Activated CD4-positive, alpha-beta T cell treated with anti-CD3 and anti-CD28 coated beads, Interleukin-2, amount 10 ng/mL, durations not matched to agents 7 days and 5 days (primary cell): ENCODE measurements at regions of chr2 and their contacts with region 1.

Region 1: DNA sequence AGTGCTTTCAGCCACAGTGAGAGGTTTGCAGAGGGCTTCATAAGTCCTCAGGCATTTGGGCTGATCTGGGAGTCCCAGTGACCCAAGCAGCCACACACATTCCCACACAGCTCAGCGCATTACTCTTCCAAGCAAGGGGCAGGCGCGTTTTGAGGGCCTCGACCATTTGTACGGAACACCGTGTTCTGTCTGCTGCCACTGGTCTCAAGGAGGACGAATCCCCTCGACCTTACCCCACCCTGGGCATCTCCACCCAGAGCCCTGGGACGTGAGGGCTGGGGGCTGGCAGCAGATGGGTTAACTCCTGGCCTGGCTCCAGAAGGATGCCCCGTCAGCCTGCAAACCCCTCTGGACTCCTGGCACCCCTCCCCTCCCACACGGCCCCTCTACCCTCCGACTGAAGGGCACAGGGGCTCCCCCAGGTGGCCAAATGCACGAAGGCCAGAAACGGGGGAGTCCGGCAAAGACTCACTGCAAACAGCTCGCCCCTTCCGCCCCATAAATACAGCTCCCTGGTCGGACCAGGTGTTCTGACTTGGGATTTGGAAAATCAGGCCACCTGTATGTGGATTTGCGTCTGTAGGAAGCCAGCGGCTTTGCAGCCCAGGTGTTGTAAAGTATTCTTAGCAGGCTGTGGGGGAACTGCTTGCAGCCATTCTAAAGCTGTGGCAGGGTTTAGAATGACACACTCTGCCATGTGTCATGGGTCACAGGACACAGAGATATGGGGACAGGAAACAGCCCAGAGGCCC is 33.6 kb upstream of the PTMA start:
- DNase-seq: peak; percentile 60
- H3K4me3 Mint-ChIP-seq: no peak overlapping the region
- H3K27ac Mint-ChIP-seq: peak overlapping the region; percentile 22
- H3K4me1 Mint-ChIP-seq: peaks cover 32% of the 10 kb centered on the region
- H3K27me3 Mint-ChIP-seq: no peaks in the 10 kb centered on the region

Region 2: DNA sequence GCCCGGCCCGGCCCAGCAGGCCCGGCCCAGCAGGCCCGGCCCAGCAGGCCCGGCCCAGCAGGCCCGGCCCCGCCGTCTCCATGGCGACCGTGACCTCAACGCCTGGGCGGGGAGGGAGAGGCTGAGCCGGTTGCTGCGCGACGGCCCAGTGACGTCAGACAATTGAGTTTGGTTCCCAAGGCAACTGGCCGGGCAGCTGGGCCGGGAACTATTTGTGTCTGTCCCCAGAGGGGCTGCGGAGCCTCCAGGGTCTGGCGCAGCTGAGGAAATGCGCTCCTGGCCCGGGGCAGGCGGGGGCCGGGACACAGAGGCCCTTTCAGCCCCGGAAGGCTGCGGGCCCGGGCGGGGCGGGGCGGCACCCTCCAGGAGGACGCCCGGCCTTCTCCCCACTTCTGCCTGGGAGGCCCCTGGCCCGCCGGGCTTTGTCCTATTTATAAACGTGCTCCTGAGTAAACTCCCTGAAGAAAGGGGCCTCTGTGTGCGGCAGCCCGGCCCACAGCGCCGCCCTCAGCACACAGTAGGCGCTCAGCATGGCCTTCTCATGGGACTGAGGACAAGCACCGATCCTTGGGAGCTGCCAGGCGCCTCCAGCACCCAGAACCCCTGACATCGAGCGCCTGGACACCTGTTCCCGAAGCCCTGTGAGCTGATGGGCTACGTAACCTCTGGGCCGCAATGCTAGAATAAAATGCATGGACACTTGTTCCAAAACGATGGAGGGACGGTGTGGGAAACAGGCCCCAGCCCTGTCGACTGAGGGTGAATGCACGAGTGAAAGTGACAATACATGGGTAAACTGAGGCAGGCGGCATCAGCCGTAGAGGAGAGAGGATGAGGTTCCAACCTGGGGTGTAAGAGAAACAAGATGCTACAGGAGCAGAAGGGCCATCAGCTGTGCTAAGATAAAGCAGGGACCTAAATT is 69.8 kb before region 1 on chr2:
- CTCF ChIA-PET with region 1: interaction called, 121 read pairs
- POLR2A ChIA-PET with region 1: no interaction called
- DNase-seq: peak; percentile 98
- H3K4me3 Mint-ChIP-seq: peak overlapping the region; percentile 56
- H3K27ac Mint-ChIP-seq: peak overlapping the region; percentile 72
- H3K4me1 Mint-ChIP-seq: peaks cover 25% of the 10 kb centered on the region
- H3K27me3 Mint-ChIP-seq: peaks cover 5% of the 10 kb centered on the region

Region 3: DNA sequence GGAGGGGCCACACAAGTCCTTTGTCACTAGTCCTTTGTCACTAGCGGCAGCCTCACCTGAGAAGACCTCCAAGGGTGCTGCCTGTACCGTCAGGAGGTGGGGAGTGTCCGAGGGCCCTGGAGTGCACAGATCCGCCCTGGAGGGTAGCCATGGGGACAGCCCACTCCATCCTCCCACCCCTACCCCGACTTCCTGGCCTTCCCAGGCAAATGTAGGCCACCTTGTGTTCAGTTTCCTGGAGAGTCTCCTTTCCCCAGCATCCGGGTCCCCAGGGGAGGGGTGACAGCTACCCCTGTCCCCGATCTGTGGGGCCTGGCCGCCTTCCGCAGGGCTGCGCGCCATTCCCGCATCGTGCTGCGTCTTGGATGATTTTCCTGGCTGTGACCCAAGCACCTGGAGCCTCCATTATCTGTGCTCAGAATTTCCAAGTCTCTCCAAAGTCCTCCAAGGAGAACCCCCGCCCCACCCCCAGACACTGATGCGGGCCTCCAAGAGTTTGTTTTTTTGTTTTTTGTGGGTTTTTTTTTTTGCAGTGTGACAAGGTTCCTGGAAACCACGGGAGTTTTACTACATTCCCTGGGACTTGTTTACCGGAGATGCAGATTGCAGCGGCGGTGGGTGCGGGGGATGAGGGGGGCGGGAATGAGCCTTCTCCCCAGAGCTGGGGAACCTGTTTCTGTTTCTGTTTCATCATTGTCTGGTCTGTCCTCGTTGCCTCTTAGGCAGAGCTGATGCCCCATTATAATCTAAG is 53.5 kb before region 1 on chr2:
- CTCF ChIA-PET with region 1: interaction called, 12 read pairs
- POLR2A ChIA-PET with region 1: no interaction called
- DNase-seq: peak; percentile 44
- H3K4me3 Mint-ChIP-seq: no peak overlapping the region
- H3K27ac Mint-ChIP-seq: peak overlapping the region; percentile 88
- H3K4me1 Mint-ChIP-seq: peaks cover 58% of the 10 kb centered on the region
- H3K27me3 Mint-ChIP-seq: no peaks in the 10 kb centered on the region

Region 4: DNA sequence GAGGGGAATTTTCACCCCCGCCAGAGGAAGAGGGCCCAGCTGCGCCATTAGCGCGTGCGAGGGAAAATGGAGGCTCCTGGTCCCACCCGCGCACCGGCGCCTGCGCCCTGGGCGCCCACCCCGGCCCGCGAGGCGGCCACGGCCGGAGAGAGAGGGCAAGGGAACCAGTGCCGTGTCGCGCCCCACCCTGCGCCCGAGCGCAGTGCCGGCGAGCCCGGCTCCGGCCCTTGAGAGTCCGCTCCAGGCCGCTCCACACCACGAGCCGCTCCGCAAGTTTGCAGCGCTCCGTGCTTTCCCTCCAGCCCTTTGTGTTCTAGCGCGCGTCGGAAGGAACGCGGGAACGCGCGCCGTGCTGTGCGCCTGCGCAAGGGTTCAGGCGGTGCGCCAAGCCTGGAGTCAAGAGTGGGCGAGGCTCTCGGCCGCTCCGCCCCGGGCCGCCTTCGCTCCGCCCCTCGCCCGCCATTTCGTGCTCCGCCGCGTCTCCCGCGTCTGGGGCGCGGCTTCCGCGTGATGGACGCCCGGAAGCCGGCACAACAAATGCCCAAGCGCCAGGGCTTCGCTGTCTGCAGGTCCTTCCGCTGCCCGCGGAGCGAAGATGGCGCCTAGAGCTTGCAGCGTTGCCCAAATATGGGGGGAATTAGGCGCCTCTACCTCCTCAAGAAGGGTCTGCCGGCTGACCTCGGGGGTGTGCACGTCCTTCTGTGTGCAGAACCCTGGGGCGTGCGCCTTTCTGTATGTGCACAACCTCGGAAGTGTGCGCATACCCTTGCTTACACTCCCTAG is 12.5 kb before region 1 on chr2:
- CTCF ChIA-PET with region 1: interaction called, 43 read pairs
- POLR2A ChIA-PET with region 1: interaction called, 3 read pairs
- DNase-seq: peak; percentile 96
- H3K4me3 Mint-ChIP-seq: peak overlapping the region; percentile 74
- H3K27ac Mint-ChIP-seq: peak overlapping the region; percentile 96
- H3K4me1 Mint-ChIP-seq: peaks cover 36% of the 10 kb centered on the region
- H3K27me3 Mint-ChIP-seq: no peaks in the 10 kb centered on the region

Region 5: DNA sequence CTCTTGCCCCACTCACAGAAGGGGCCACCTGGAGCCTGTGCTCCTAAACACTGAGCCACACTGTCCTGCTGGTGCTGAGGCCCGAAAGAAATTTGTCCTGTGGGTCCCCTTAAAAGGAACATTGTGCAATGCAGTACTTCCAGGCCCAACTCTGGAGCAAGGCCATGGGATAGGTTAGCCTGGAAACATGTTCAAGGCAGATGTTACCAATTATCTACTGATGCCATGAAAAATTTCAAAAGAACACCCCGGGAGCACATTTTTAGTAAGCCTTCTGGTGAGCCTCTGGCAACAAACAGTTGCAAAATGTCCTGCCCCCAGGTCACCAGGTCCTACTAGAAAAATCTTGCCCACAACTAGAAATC is 21.2 kb after region 1 on chr2:
- CTCF ChIA-PET with region 1: interaction called, 28 read pairs
- POLR2A ChIA-PET with region 1: no interaction called
- DNase-seq: no peak
- H3K4me3 Mint-ChIP-seq: no peak overlapping the region
- H3K27ac Mint-ChIP-seq: no peak overlapping the region
- H3K4me1 Mint-ChIP-seq: no peaks in the 10 kb centered on the region
- H3K27me3 Mint-ChIP-seq: peaks cover 2% of the 10 kb centered on the region

Region 6: DNA sequence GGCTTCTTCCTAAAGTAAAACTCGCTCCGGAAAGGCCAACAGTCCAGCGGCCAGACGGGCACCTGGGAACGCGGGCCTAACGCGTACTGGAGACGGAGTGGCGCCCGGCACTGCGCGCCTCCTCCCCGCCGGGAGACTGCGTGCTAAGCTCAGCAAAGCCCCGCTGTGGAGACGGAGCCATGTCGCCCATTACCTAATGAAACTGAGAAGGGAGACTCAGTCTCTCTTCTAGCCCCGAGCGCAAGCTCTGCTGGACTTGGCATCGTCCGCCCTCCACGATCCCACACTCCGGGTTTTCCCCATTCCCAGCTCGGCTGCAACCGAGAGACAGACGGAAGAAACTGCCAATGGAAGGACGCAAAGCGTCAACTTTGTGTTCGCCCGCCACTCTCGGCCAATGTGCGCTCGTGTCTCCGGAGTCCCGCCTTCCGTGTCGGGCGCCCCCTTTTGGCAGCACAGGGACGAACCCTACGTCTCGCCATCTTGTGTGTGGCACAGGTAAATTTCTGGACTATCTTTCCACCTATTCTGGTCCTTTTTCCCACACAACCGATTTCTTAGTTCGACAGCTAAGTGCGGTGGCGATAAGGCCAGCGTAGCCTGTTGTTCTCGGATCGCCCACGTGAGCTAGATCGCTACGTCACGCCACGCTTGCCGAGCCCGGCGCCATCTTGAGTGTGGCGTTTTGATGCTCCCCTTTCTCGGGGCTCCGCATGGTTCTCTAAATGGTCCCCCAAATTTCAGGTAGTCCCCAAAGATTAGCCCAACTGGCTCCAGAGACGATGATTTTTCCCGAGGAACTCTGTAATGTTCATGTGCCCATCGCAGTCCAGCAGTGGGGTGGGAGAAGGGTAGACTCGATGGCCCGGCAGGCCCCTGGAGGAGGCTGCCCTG is 32.2 kb after region 1 on chr2:
- CTCF ChIA-PET with region 1: interaction called, 167 read pairs
- POLR2A ChIA-PET with region 1: no interaction called
- DNase-seq: peak; percentile 98
- H3K4me3 Mint-ChIP-seq: peak overlapping the region; percentile 91
- H3K27ac Mint-ChIP-seq: peak overlapping the region; percentile 100
- H3K4me1 Mint-ChIP-seq: peaks cover 26% of the 10 kb centered on the region
- H3K27me3 Mint-ChIP-seq: peaks cover 2% of the 10 kb centered on the region